MCF 10A (cell line): ENCODE measurements at regions of chr15 and their contacts with region 1.

Region 1: GRCh38 chr15:30991255-30992072 is at the start of gene MTMR10:
- DNase-seq: peak; percentile 65
- H3K4me3 Mint-ChIP-seq: peak within 1 kb of the TSS; percentile 92
- H3K27ac Mint-ChIP-seq: peak within 1 kb of the TSS; percentile 97
- H3K4me1 Mint-ChIP-seq: peaks cover 13% of the 10 kb centered on the region
- H3K27me3 Mint-ChIP-seq: no peaks in the 10 kb centered on the region
- CTCF ChIP-seq: no peak
- total RNA-seq, gene MTMR10: 11.4 and 13.0 TPM in 2 replicates

Region 2: GRCh38 chr15:30043211-30043655 is 948.2 kb before region 1 on chr15:
- CTCF ChIA-PET with region 1: no interaction called
- POLR2A ChIA-PET with region 1: no interaction called
- intact Hi-C with region 1: no loop called
- DNase-seq: peak; percentile 33
- H3K4me3 Mint-ChIP-seq: no peak overlapping the region
- H3K27ac Mint-ChIP-seq: no peak overlapping the region
- H3K4me1 Mint-ChIP-seq: peaks cover 24% of the 10 kb centered on the region
- H3K27me3 Mint-ChIP-seq: no peaks in the 10 kb centered on the region
- CTCF ChIP-seq: peak; percentile 38

Region 3: DNA sequence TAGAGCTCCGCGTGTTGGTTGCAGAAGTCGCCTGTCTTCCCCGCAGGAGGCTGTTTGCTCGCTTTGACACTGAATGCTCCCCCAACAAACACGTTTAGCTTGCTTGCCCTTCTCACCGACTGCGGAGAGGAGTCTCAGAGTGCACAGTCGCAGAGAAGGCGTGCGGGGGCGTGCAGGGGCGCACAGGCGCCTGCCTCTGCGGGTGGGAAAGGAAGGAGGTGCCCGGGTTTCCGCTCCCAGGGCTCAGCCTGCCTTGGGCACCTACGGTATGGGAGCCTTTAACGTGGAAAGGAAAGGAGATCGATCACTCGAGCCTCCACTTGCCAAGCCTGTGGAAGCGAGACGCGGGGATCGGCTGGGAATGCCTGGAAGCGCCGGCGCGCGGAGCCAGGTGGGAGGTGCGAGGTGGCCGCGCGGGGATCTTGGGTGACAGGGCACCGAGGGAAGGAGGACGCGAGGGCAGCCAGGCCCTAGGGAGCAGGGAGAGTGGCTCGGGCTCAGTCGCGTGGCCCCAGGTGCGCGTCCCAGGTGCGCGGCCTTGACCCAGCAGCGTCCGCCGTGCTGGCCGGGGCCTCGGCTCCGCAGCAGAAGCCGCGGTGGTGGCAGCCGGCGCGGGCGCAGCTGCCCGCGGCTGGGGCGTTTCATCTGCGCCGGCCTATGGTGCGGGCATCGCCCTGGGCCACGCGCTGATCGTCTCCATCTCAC is 87.8 kb before region 1 on chr15 and contains the start of gene FAN1:
- CTCF ChIA-PET with region 1: no interaction called
- POLR2A ChIA-PET with region 1: interaction called, 13 read pairs
- intact Hi-C with region 1: loop called (anchors 5 kb)
- DNase-seq: peak; percentile 91
- H3K4me3 Mint-ChIP-seq: peak within 1 kb of the TSS; percentile 99
- H3K27ac Mint-ChIP-seq: peak within 1 kb of the TSS; percentile 93
- H3K4me1 Mint-ChIP-seq: peaks cover 13% of the 10 kb centered on the region
- H3K27me3 Mint-ChIP-seq: no peaks in the 10 kb centered on the region
- CTCF ChIP-seq: no peak
- total RNA-seq, gene FAN1: 22.4 and 29.8 TPM in 2 replicates

Region 4: GRCh38 chr15:30962079-30962478 is 29.4 kb before region 1 on chr15:
- CTCF ChIA-PET with region 1: interaction called, 5 read pairs
- POLR2A ChIA-PET with region 1: interaction called, 30 read pairs
- intact Hi-C with region 1: no loop called
- DNase-seq: peak; percentile 64
- H3K4me3 Mint-ChIP-seq: peak overlapping the region; percentile 13
- H3K27ac Mint-ChIP-seq: peak overlapping the region; percentile 61
- H3K4me1 Mint-ChIP-seq: peaks cover 15% of the 10 kb centered on the region
- H3K27me3 Mint-ChIP-seq: no peaks in the 10 kb centered on the region
- CTCF ChIP-seq: no peak

Region 5: GRCh38 chr15:30979457-30979856 is 12.0 kb before region 1 on chr15:
- CTCF ChIA-PET with region 1: interaction called, 6 read pairs
- POLR2A ChIA-PET with region 1: interaction called, 16 read pairs
- intact Hi-C with region 1: no loop called
- DNase-seq: no peak
- H3K4me3 Mint-ChIP-seq: no peak overlapping the region
- H3K27ac Mint-ChIP-seq: no peak overlapping the region
- H3K4me1 Mint-ChIP-seq: peaks cover 7% of the 10 kb centered on the region
- H3K27me3 Mint-ChIP-seq: no peaks in the 10 kb centered on the region
- CTCF ChIP-seq: no peak

Region 6: GRCh38 chr15:31016446-31016915 is 25.0 kb after region 1 on chr15:
- CTCF ChIA-PET with region 1: no interaction called
- POLR2A ChIA-PET with region 1: interaction called, 20 read pairs
- intact Hi-C with region 1: no loop called
- DNase-seq: no peak
- H3K4me3 Mint-ChIP-seq: no peak overlapping the region
- H3K27ac Mint-ChIP-seq: no peak overlapping the region
- H3K4me1 Mint-ChIP-seq: no peaks in the 10 kb centered on the region
- H3K27me3 Mint-ChIP-seq: no peaks in the 10 kb centered on the region
- CTCF ChIP-seq: no peak

Region 7: GRCh38 chr15:31326156-31326732 is 334.8 kb after region 1 on chr15:
- CTCF ChIA-PET with region 1: no interaction called
- POLR2A ChIA-PET with region 1: interaction called, 16 read pairs
- intact Hi-C with region 1: no loop called
- DNase-seq: peak; percentile 97
- H3K4me3 Mint-ChIP-seq: peak overlapping the region; percentile 95
- H3K27ac Mint-ChIP-seq: no peak overlapping the region
- H3K4me1 Mint-ChIP-seq: peaks cover 19% of the 10 kb centered on the region
- H3K27me3 Mint-ChIP-seq: no peaks in the 10 kb centered on the region
- CTCF ChIP-seq: no peak

Region 8: GRCh38 chr15:31811641-31812040 is 820.2 kb after region 1 on chr15:
- CTCF ChIA-PET with region 1: no interaction called
- POLR2A ChIA-PET with region 1: no interaction called
- intact Hi-C with region 1: no loop called
- DNase-seq: no peak
- H3K4me3 Mint-ChIP-seq: no peak overlapping the region
- H3K27ac Mint-ChIP-seq: no peak overlapping the region
- H3K4me1 Mint-ChIP-seq: no peaks in the 10 kb centered on the region
- H3K27me3 Mint-ChIP-seq: no peaks in the 10 kb centered on the region
- CTCF ChIP-seq: no peak